ENCODE measurements at regions of chr19 and their contacts with region 1.

Region 1: GRCh38 chr19:52095172-52096014 is at the start of gene ZNF841:
- DNase-seq: peak; percentile 88
- ATAC-seq: peak; percentile 99
- H3K4me3 ChIP-seq: peak within 1 kb of the TSS; percentile 89 to 100 (median 99)
- H3K4me3 Mint-ChIP-seq: peak within 1 kb of the TSS; percentile 93
- H3K27ac ChIP-seq: peak within 1 kb of the TSS; percentile 62 to 87
- H3K27ac Mint-ChIP-seq: peak within 1 kb of the TSS; percentile 85
- H3K4me1 ChIP-seq: peaks cover 14 to 20% of the 10 kb centered on the region in 2 donors
- H3K4me1 Mint-ChIP-seq: peaks cover 33% of the 10 kb centered on the region
- H3K27me3 ChIP-seq: no peaks in the 10 kb centered on the region
- H3K27me3 Mint-ChIP-seq: no peaks in the 10 kb centered on the region
- CTCF ChIP-seq: no peak
- total RNA-seq, gene ZNF841: 50.8 and 54.5 TPM in 2 replicates

Region 2: DNA sequence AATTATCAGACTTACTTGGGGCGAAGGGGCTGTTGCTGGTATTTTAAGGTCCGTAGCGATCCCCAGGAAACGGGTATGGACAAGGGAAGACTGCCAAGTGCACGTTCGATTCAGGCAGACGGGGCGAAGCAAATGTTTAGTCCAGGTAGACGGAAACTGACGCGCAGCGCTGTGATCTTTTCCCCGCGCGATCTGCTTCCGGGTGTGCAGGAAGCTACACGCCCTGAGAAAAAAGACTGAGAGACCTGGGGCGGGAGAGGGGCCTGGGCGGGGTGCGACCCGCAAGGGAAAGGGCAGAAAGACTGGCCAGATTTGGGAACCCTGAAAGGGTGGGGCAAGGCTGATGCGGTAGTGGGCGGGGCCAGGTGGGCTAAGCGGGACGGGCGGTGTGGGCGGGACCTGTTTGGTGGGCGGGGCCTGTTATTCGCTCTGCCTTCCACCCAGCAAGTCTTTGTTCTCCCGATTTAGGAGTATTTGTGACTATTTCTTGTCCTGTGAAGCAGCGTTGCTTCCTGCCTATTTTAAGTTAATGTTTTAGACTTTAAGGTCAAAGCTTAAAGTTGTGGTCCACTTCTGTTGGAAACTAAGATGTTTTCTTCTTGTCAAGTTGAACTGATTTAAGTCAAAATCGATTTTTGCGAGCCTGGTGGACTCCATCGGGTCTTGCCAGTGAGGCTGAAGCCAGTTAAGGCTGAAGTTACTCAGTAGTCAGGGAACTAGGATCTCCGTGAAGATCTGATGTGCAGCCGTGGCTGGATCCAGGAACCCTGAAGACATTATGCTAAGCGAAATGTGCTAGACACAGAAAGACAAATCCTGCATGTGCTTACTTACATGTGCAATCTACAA is 76.2 kb after region 1 on chr19 and contains the start of gene ZNF836:
- CTCF ChIA-PET with region 1: no interaction called
- POLR2A ChIA-PET with region 1: no interaction called
- intact Hi-C with region 1: loop called (anchors 1 kb)
- DNase-seq: peak; percentile 92
- ATAC-seq: peak; percentile 98
- H3K4me3 ChIP-seq: peak within 1 kb of the TSS; percentile 71 to 100 (median 82)
- H3K4me3 Mint-ChIP-seq: peak within 1 kb of the TSS; percentile 98
- H3K27ac ChIP-seq: peak within 1 kb of the TSS; percentile 66 to 90
- H3K27ac Mint-ChIP-seq: peak within 1 kb of the TSS; percentile 97
- H3K4me1 ChIP-seq: peaks cover 17 to 20% of the 10 kb centered on the region in 2 donors
- H3K4me1 Mint-ChIP-seq: peaks cover 35% of the 10 kb centered on the region
- H3K27me3 ChIP-seq: no peaks in the 10 kb centered on the region
- H3K27me3 Mint-ChIP-seq: no peaks in the 10 kb centered on the region
- CTCF ChIP-seq: no peak
- total RNA-seq, gene ZNF836: 42.0 and 46.4 TPM in 2 replicates

Region 3: GRCh38 chr19:52237771-52238400 is 142.5 kb after region 1 on chr19:
- CTCF ChIA-PET with region 1: no interaction called
- POLR2A ChIA-PET with region 1: no interaction called
- intact Hi-C with region 1: loop called (anchors 1 kb)
- DNase-seq: peak; percentile 74
- ATAC-seq: peak; percentile 77
- H3K4me3 ChIP-seq: no peak overlapping the region
- H3K4me3 Mint-ChIP-seq: no peak overlapping the region
- H3K27ac ChIP-seq: no peak overlapping the region
- H3K27ac Mint-ChIP-seq: no peak overlapping the region
- H3K4me1 ChIP-seq: no peaks in the 10 kb centered on the region
- H3K4me1 Mint-ChIP-seq: no peaks in the 10 kb centered on the region
- H3K27me3 ChIP-seq: no peaks in the 10 kb centered on the region
- H3K27me3 Mint-ChIP-seq: no peaks in the 10 kb centered on the region
- CTCF ChIP-seq: peak; percentile 93